ENCODE measurements at regions of chr1 and their contacts with region 1.

Region 1: GRCh38 chr1:180631766-180632325 is at the start of gene XPR1:
- DNase-seq: peak; percentile 84
- ATAC-seq: peak; percentile 95
- H3K4me3 Mint-ChIP-seq: peak within 1 kb of the TSS; percentile 35
- H3K27ac Mint-ChIP-seq: peak within 1 kb of the TSS; percentile 88
- H3K4me1 Mint-ChIP-seq: peaks cover 17% of the 10 kb centered on the region
- H3K27me3 Mint-ChIP-seq: peaks cover 5% of the 10 kb centered on the region
- CTCF ChIP-seq: no peak
- total RNA-seq, gene XPR1: 17.1 and 20.4 TPM in 2 replicates

Region 2: GRCh38 chr1:179882243-179883039 is 749.4 kb before region 1 on chr1 and contains the start of gene TOR1AIP1:
- CTCF ChIA-PET with region 1: no interaction called
- POLR2A ChIA-PET with region 1: no interaction called
- intact Hi-C with region 1: loop called (anchors 1 kb)
- DNase-seq: peak; percentile 96
- ATAC-seq: peak; percentile 76
- H3K4me3 Mint-ChIP-seq: peak within 1 kb of the TSS; percentile 100
- H3K27ac Mint-ChIP-seq: peak within 1 kb of the TSS; percentile 100
- H3K4me1 Mint-ChIP-seq: peaks cover 64% of the 10 kb centered on the region
- H3K27me3 Mint-ChIP-seq: no peaks in the 10 kb centered on the region
- CTCF ChIP-seq: no peak
- total RNA-seq, gene TOR1AIP1: 42.3 and 46.6 TPM in 2 replicates

Region 3: DNA sequence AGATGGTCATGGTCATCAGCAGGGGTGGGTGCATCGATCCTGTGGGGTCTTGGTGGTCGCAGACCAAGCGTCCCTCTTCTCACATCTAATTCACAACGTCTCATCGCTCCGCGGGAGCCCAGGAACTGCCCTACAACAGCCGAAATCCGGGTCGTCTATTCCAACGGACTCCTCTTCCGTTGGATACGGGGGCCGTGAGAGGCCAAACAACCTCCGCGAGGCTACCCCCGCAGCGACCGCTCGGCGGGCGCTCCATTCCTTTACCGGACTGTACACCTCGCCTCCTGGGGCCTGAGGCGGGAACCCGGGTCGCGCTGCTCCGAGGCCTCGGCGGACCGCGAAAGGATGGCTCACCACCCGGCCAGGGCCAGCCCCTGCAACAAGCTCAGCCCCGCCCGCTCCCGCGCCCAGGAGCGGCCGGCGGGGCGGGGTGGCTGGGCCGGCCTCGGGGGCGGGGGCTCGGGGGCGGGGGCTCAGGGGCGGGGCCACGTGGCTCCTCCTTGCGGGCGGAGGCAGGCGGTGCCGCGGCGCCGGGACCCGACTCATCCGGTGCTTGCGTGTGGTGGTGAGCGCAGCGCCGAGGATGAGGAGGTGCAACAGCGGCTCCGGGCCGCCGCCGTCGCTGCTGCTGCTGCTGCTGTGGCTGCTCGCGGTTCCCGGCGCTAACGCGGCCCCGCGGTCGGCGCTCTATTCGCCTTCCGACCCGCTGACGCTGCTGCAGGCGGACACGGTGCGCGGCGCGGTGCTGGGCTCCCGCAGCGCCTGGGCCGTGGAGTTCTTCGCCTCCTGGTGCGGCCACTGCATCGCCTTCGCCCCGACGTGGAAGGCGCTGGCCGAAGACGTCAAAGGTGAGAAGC is 477.3 kb before region 1 on chr1 and contains the start of gene QSOX1:
- CTCF ChIA-PET with region 1: no interaction called
- POLR2A ChIA-PET with region 1: no interaction called
- intact Hi-C with region 1: loop called (anchors 1 kb)
- DNase-seq: peak; percentile 79
- ATAC-seq: peak; percentile 97
- H3K4me3 Mint-ChIP-seq: peak within 1 kb of the TSS; percentile 96
- H3K27ac Mint-ChIP-seq: peak within 1 kb of the TSS; percentile 83
- H3K4me1 Mint-ChIP-seq: peaks cover 23% of the 10 kb centered on the region
- H3K27me3 Mint-ChIP-seq: no peaks in the 10 kb centered on the region
- CTCF ChIP-seq: no peak
- total RNA-seq, gene QSOX1: 11.9 and 12.9 TPM in 2 replicates

Region 4: DNA sequence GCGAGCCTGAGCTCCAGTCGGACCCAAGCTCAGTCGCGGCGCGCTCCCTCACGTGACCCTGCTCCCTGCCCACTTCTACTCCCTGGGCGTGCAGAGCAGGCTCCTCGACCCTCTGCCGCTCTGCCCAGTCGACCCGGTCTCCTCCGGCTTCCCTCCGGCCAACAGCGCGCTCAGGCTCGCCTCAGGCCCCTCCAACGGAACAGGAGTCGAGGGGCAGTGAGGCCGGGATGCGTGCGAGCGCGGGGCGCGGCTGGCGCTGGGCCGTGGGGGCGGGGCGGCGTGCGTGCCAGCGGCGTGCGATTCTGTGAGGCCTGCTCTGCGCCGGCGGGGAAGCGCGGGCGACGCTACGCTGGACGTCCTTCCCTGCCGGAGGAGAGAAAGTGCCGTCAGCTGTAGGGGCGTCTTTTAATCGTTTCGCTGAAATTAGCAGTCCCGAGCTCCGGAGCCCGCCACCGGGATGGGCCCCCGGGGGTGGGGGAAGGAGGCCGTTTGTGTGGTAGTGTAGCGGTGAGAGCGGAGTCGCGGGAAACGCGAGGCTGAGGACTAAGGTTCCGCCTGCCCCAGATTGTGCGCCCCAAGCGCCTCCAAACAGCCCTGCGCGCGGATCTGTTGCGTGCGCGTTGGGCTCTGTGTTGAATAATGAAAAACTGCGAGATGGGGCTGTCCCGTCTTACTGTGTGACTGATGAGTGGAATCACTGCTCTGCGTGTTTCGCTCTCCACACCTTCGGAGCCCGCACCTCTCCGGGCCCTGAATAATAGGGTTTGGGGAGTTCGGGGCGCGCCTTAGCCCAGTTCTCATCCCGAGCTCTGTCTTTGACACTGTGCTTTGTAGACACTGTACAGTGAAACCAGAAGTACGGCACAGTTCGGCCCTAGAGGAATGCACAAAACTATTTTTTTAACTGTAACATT is 129.2 kb before region 1 on chr1 and contains the start of gene ACBD6:
- CTCF ChIA-PET with region 1: interaction called, 4 read pairs
- POLR2A ChIA-PET with region 1: interaction called, 10 read pairs
- intact Hi-C with region 1: loop called (anchors 1 kb)
- DNase-seq: peak; percentile 82
- ATAC-seq: peak; percentile 83
- H3K4me3 Mint-ChIP-seq: peak within 1 kb of the TSS; percentile 96
- H3K27ac Mint-ChIP-seq: peak within 1 kb of the TSS; percentile 98
- H3K4me1 Mint-ChIP-seq: peaks cover 30% of the 10 kb centered on the region
- H3K27me3 Mint-ChIP-seq: no peaks in the 10 kb centered on the region
- CTCF ChIP-seq: no peak
- total RNA-seq, gene ACBD6: 55.4 and 61.5 TPM in 2 replicates

Region 5: DNA sequence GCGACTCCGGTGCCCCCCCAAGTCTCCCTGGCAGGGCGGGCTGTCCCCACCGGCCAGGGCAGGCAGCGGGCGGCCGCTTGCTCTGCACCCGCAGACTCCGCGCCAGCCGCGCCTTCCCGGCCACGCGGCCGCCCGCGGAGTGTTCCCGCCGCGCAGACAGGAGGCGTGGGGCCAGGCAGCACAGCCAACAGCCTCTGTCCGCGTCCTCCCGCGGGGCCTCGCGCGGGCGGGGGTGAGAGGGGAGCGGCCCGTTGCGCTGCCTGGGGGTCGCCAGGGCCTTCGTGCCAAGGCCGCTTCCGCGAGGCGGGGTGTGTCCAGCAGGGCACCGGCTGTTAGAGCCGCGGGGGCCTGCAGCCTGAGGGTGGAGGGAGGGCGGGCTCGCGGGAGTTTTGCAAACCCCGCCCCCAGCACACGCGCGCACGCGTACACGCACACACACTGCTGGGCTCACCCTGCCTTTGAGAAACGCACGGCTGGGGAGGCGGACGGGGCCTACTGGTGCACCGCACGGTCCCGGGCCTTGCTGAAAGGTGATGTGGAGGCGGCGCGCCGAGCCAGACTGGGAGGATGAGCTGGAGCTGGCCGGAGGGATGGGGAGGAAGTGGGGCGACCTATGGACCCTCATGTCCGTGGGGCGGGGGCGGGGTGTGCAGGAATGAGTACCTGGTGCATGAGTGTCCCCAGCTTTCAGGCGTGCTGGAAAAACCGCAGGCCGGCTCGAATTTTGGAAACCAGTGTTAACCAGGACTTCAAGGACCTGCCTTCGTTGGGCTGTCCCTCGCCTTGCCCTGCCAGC is 322.4 kb after region 1 on chr1:
- CTCF ChIA-PET with region 1: no interaction called
- POLR2A ChIA-PET with region 1: no interaction called
- intact Hi-C with region 1: loop called (anchors 5 kb)
- DNase-seq: peak; percentile 46
- ATAC-seq: peak; percentile 89
- H3K4me3 Mint-ChIP-seq: peak overlapping the region; percentile 68
- H3K27ac Mint-ChIP-seq: no peak overlapping the region
- H3K4me1 Mint-ChIP-seq: peaks cover 3% of the 10 kb centered on the region
- H3K27me3 Mint-ChIP-seq: no peaks in the 10 kb centered on the region
- CTCF ChIP-seq: no peak

Region 6: GRCh38 chr1:181128592-181129497 is 497.0 kb after region 1 on chr1:
- CTCF ChIA-PET with region 1: no interaction called
- POLR2A ChIA-PET with region 1: no interaction called
- intact Hi-C with region 1: loop called (anchors 1 kb)
- DNase-seq: peak; percentile 60
- ATAC-seq: peak; percentile 60
- H3K4me3 Mint-ChIP-seq: peak overlapping the region; percentile 90
- H3K27ac Mint-ChIP-seq: peak overlapping the region; percentile 94
- H3K4me1 Mint-ChIP-seq: peaks cover 90% of the 10 kb centered on the region
- H3K27me3 Mint-ChIP-seq: no peaks in the 10 kb centered on the region
- CTCF ChIP-seq: no peak

Region 7: DNA sequence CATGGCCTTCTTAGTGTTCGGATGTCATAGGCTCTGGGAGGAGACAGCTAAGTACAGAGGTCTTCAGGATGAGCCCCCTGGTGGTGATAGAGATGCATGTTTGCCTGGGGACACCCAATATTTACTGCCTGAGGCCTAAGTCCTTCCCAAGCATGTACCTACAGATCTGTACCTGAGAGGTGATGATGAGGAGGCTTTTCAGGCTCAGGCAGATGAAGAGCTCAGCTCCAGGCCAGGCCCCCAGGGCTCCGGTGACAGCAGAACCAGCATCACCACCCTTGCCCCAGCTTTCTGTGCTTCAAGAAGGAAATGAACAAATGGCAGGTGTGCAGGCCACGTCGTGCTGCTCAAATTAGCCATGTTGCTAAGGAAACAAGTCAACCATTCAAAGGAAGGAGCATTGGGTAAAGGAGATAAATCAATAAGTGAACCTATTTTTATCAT is 872.6 kb after region 1 on chr1:
- CTCF ChIA-PET with region 1: no interaction called
- POLR2A ChIA-PET with region 1: no interaction called
- intact Hi-C with region 1: loop called (anchors 10 kb)
- DNase-seq: no peak
- ATAC-seq: peak; percentile 58
- H3K4me3 Mint-ChIP-seq: peak overlapping the region; percentile 76
- H3K27ac Mint-ChIP-seq: peak overlapping the region; percentile 92
- H3K4me1 Mint-ChIP-seq: peaks cover 70% of the 10 kb centered on the region
- H3K27me3 Mint-ChIP-seq: no peaks in the 10 kb centered on the region
- CTCF ChIP-seq: no peak